Activated B cell treated with CpG ODN at 0.5 μM for 24 hours (primary cell): ENCODE measurements at regions of chr6 and their contacts with region 1.

Region 1: DNA sequence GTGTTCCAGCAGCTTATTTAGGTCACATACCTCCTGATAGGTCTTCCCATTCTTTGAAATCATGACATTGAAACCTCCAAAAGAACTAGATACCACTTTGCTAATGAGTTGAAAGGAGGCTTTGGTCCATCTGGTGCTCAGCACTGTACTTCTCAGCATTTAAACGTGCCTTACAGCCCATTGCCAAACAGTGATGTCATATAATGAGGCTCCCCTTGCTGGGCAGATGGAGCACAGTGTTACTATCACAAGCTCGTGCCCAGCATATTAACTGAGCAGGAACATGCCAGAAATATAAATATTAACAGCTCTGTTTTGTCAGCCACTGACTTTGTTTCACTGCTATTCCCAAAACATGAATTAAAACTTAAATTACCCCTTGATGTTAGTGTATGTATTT is 25.5 kb upstream of the MAPK13 start:
- DNase-seq: no peak
- ATAC-seq: no peak
- H3K4me3 Mint-ChIP-seq: no peak overlapping the region
- H3K27ac Mint-ChIP-seq: no peak overlapping the region
- H3K4me1 Mint-ChIP-seq: peaks cover 39% of the 10 kb centered on the region
- H3K27me3 Mint-ChIP-seq: no peaks in the 10 kb centered on the region
- CTCF ChIP-seq: no peak

Region 2: GRCh38 chr6:36123257-36124139 is 18.7 kb after region 1 on chr6:
- CTCF ChIA-PET with region 1: interaction called, 15 read pairs
- POLR2A ChIA-PET with region 1: interaction called, 10 read pairs
- intact Hi-C with region 1: loop called (anchors 1 kb)
- DNase-seq: peak; percentile 72
- ATAC-seq: peak; percentile 73
- H3K4me3 Mint-ChIP-seq: peak overlapping the region; percentile 41
- H3K27ac Mint-ChIP-seq: peak overlapping the region; percentile 86
- H3K4me1 Mint-ChIP-seq: peaks cover 73% of the 10 kb centered on the region
- H3K27me3 Mint-ChIP-seq: no peaks in the 10 kb centered on the region
- CTCF ChIP-seq: no peak

Region 3: DNA sequence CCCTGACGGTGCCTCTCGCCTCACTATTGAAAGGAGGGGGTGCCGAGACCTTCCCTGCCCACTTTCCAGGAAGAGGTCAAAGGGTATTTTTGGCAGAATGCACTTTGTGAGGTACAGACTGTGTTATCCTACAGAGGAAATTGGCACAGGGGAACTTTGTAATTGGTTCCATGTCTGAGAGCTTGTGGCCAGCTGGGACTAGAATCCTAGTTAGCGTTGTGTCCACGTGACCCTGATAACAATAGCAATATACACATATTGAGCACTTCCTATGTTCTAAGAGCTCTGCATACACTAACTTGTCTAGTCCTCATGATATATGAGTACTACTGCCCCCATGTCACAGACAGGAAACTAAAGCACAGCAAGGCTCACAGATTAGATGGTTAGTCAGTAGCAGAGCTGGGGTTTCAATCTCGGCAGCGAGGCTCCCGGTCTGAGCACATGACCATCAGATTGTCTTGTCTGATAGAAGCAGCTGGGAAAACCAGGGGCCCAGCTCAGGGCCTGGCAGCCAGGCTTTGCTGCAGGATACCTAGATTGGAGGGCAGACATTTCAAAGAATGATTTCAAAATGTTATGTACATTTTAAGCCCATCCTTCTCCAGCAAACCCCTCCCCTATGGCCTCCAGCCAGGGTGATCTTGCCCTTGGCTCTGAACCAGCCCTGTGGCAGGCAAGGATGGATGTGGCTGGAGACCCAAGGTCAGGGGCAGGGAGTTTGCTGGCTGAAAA is 26.8 kb after region 1 on chr6:
- CTCF ChIA-PET with region 1: no interaction called
- POLR2A ChIA-PET with region 1: interaction called, 4 read pairs
- intact Hi-C with region 1: loop called (anchors 2 kb)
- DNase-seq: no peak
- ATAC-seq: peak; percentile 51
- H3K4me3 Mint-ChIP-seq: peak overlapping the region; percentile 86
- H3K27ac Mint-ChIP-seq: peak overlapping the region; percentile 69
- H3K4me1 Mint-ChIP-seq: peaks cover 53% of the 10 kb centered on the region
- H3K27me3 Mint-ChIP-seq: no peaks in the 10 kb centered on the region
- CTCF ChIP-seq: no peak